ENCODE measurements at regions of chr2 and their contacts with region 1.

Region 1: DNA sequence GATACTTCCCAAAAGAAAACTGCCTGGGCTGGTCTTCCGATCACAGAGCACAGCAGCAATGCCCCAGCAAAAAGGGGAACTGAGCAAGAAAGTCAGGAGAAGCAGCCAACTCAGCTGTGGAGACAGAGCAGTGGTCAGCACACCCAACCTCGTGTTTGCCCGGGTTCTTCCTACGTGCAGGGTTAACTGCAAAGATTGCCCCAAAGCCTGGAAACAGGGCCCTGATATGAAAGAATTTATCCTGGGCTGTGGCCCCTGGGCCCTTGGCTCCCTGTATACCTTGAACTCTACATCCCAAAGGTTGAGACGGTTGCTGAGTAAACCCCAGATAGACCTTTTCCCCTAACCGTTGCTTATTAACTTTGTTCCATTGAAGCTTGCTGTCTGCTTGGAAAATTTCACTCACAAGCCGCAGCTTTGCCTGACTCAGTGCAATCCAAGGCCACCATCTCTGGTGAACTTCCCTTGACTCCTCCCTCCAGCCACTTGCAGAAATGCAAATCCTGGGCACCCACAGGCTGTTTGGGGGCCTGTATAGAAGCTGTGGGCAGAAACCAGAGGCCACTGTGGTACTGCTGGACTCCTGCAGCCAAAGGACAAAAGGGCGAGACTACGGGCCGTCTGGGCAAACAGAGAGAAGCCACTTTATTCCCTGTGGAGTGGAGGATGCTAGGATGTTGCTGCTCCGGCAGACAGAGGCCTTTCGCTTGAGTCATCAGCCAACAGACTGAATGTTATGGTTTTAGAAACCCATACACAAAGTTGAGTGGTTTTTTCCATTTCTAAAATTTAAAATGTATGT is 18.2 kb downstream of the NRP2 start:
- DNase-seq: peak; percentile 48
- H3K4me3 ChIP-seq: no peak overlapping the region
- H3K27ac ChIP-seq: peak overlapping the region; percentile 82
- H3K4me1 ChIP-seq: peaks cover 46% of the 10 kb centered on the region
- H3K27me3 ChIP-seq: no peaks in the 10 kb centered on the region
- CTCF ChIP-seq: no peak

Region 2: DNA sequence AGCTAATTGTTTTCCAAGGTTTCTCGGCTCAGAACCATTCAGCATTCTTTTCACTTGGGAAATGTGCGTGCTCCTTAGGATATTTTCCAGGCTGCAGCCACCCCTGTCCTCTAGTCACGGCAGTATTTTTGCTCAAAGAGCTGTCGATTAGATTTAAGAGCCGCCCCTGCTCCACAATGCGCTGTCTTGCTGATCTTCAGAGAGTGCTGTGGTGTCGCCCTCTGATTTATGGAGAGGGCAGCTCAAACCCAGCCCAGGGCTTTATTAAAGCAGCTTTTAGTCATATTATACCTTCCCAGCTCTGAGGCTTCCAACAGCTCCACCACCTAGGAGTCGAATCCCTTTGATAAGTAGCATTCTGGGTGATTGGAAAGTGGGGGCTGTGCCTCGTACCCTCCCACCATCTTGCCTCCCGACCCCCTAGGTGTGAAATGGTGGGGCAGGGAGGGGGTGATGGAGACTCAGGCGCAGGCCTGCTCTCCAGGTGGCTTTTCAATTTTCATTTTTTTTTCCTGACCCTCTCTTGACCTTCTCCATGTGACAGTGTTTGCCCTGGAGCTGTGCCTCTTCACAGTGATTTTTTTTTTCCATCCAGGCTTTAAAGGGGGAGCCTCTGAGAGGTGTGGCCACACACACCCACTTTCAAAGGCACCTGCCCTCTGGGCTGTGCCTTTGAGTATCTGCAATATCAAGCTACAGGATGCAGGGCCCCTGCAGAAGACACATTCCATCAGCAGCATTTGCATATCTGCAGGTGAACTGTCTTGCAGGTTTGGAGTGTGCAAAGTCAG is 71.3 kb before region 1 on chr2:
- CTCF ChIA-PET with region 1: no interaction called
- dilution Hi-C with region 1: no loop called
- in situ Hi-C with region 1: no loop called
- intact Hi-C with region 1: no loop called
- DNase-seq: no peak
- H3K4me3 ChIP-seq: no peak overlapping the region
- H3K27ac ChIP-seq: no peak overlapping the region
- H3K4me1 ChIP-seq: no peaks in the 10 kb centered on the region
- H3K27me3 ChIP-seq: no peaks in the 10 kb centered on the region
- CTCF ChIP-seq: no peak

Region 3: GRCh38 chr2:205685314-205686055 is 15.0 kb before region 1 on chr2:
- CTCF ChIA-PET with region 1: no interaction called
- dilution Hi-C with region 1: no loop called
- in situ Hi-C with region 1: no loop called
- intact Hi-C with region 1: loop called (anchors 2 kb)
- DNase-seq: peak; percentile 83
- H3K4me3 ChIP-seq: peak overlapping the region; percentile 62 to 85 (median 81)
- H3K27ac ChIP-seq: peak overlapping the region; percentile 64
- H3K4me1 ChIP-seq: peaks cover 58% of the 10 kb centered on the region
- H3K27me3 ChIP-seq: no peaks in the 10 kb centered on the region
- CTCF ChIP-seq: no peak

Region 4: GRCh38 chr2:205754924-205755321 is 54.4 kb after region 1 on chr2:
- CTCF ChIA-PET with region 1: no interaction called
- dilution Hi-C with region 1: loop called (anchors 5 kb)
- in situ Hi-C with region 1: no loop called
- intact Hi-C with region 1: no loop called
- DNase-seq: peak; percentile 49
- H3K4me3 ChIP-seq: no peak overlapping the region
- H3K27ac ChIP-seq: peak overlapping the region; percentile 44
- H3K4me1 ChIP-seq: peaks cover 51% of the 10 kb centered on the region
- H3K27me3 ChIP-seq: no peaks in the 10 kb centered on the region
- CTCF ChIP-seq: no peak

Region 5: GRCh38 chr2:205776139-205776538 is 75.6 kb after region 1 on chr2:
- CTCF ChIA-PET with region 1: no interaction called
- dilution Hi-C with region 1: loop called (anchors 5 kb)
- in situ Hi-C with region 1: no loop called
- intact Hi-C with region 1: no loop called
- DNase-seq: no peak
- H3K4me3 ChIP-seq: no peak overlapping the region
- H3K27ac ChIP-seq: peak overlapping the region; percentile 87
- H3K4me1 ChIP-seq: peaks cover 48% of the 10 kb centered on the region
- H3K27me3 ChIP-seq: no peaks in the 10 kb centered on the region
- CTCF ChIP-seq: peak; percentile 34 to 54

Region 6: GRCh38 chr2:205872716-205873115 is 172.2 kb after region 1 on chr2:
- CTCF ChIA-PET with region 1: no interaction called
- dilution Hi-C with region 1: loop called (anchors 5 kb)
- in situ Hi-C with region 1: no loop called
- intact Hi-C with region 1: no loop called
- DNase-seq: no peak
- H3K4me3 ChIP-seq: no peak overlapping the region
- H3K27ac ChIP-seq: no peak overlapping the region
- H3K4me1 ChIP-seq: peaks cover 13% of the 10 kb centered on the region
- H3K27me3 ChIP-seq: no peaks in the 10 kb centered on the region
- CTCF ChIP-seq: no peak